ENCODE measurements at regions of chr12 and their contacts with region 1.

Region 1: GRCh38 chr12:13211859-13212664 is 15.5 kb downstream of the EMP1 start:
- DNase-seq: peak; percentile 71
- ATAC-seq: peak; percentile 48
- H3K4me3 ChIP-seq: no peak overlapping the region
- H3K27ac ChIP-seq: no peak overlapping the region
- H3K4me1 ChIP-seq: peaks cover 22% of the 10 kb centered on the region
- H3K27me3 ChIP-seq: no peaks in the 10 kb centered on the region
- CTCF ChIP-seq: peak; percentile 80
- POLR2A ChIP-seq: peak; percentile 37; the same call in 1 of the 2 replicates
- RAD21 ChIP-seq: peak; percentile 84

Region 2: DNA sequence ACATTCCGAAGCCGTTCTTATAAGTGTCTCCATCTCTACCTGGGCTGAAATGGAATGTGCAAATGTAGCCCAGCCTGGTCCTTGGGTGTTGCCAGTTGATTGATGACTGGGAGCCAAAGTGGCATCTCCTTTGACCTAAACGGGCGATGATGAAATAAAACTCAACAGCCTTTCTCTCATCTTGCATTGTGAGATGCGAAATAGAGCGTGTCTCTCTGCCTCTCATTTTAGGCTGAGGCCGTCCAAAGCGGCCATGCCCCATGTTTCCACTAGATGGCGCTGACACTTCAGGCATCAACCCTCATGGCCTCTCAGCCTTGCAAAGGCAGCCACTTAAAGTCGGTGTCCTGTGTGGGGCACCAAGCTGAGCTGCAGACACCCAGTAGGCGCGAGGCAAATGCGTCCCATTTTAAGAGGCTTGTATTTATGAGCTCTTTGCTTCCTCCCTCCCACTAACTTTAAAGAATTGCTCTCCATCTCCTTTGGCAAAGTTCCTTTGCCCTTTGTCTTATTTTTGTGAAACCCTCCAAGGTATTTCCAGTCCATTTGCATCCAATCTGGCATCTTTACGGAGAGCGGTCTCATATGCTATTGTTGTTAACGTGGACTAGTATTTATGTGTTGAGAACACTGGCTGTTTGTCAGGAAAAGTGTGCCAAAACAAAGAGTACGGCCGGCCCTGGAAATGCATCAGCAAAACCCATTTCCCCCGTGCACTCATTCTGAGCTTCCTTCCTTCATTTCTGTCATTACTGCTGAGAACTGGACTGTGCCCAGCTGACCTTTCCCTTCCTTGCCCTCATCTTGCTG is 295.7 kb before region 1 on chr12:
- CTCF ChIA-PET with region 1: no interaction called
- POLR2A ChIA-PET with region 1: no interaction called
- dilution Hi-C with region 1: no loop called
- in situ Hi-C with region 1: loop called (anchors 5 kb)
- intact Hi-C with region 1: loop called (anchors 1 kb)
- DNase-seq: peak; percentile 73
- ATAC-seq: peak; percentile 91
- H3K4me3 ChIP-seq: no peak overlapping the region
- H3K27ac ChIP-seq: no peak overlapping the region
- H3K4me1 ChIP-seq: peaks cover 10% of the 10 kb centered on the region
- H3K27me3 ChIP-seq: no peaks in the 10 kb centered on the region
- CTCF ChIP-seq: peak; percentile 95
- POLR2A ChIP-seq: peak; percentile 56
- RAD21 ChIP-seq: peak; percentile 97

Region 3: GRCh38 chr12:13023811-13024530 is 188.1 kb before region 1 on chr12:
- CTCF ChIA-PET with region 1: interaction called, 19 read pairs
- POLR2A ChIA-PET with region 1: no interaction called
- dilution Hi-C with region 1: no loop called
- in situ Hi-C with region 1: loop called (anchors 5 kb)
- intact Hi-C with region 1: loop called (anchors 1 kb)
- DNase-seq: peak; percentile 82
- ATAC-seq: peak; percentile 94
- H3K4me3 ChIP-seq: no peak overlapping the region
- H3K27ac ChIP-seq: no peak overlapping the region
- H3K4me1 ChIP-seq: peaks cover 3% of the 10 kb centered on the region
- H3K27me3 ChIP-seq: peaks cover 2% of the 10 kb centered on the region; the same call in 1 of the 2 replicates
- CTCF ChIP-seq: peak; percentile 80
- POLR2A ChIP-seq: 0 out of 2 replicates have a peak, but pooled peaks have one; percentile 46
- RAD21 ChIP-seq: peak; percentile 85

Region 4: GRCh38 chr12:13044002-13044905 is 167.8 kb before region 1 on chr12 and contains the start of gene FAM234B:
- CTCF ChIA-PET with region 1: interaction called, 11 read pairs
- POLR2A ChIA-PET with region 1: no interaction called
- dilution Hi-C with region 1: no loop called
- in situ Hi-C with region 1: no loop called
- intact Hi-C with region 1: no loop called
- DNase-seq: peak; percentile 62
- ATAC-seq: peak; percentile 99
- H3K4me3 ChIP-seq: peak within 1 kb of the TSS; percentile 95
- H3K27ac ChIP-seq: peak within 1 kb of the TSS; percentile 50
- H3K4me1 ChIP-seq: no peaks in the 10 kb centered on the region
- H3K27me3 ChIP-seq: no peaks in the 10 kb centered on the region
- CTCF ChIP-seq: no peak
- POLR2A ChIP-seq: no peak
- RAD21 ChIP-seq: no peak
- total RNA-seq, gene FAM234B: 6.7 and 8.6 TPM in 2 replicates

Region 5: DNA sequence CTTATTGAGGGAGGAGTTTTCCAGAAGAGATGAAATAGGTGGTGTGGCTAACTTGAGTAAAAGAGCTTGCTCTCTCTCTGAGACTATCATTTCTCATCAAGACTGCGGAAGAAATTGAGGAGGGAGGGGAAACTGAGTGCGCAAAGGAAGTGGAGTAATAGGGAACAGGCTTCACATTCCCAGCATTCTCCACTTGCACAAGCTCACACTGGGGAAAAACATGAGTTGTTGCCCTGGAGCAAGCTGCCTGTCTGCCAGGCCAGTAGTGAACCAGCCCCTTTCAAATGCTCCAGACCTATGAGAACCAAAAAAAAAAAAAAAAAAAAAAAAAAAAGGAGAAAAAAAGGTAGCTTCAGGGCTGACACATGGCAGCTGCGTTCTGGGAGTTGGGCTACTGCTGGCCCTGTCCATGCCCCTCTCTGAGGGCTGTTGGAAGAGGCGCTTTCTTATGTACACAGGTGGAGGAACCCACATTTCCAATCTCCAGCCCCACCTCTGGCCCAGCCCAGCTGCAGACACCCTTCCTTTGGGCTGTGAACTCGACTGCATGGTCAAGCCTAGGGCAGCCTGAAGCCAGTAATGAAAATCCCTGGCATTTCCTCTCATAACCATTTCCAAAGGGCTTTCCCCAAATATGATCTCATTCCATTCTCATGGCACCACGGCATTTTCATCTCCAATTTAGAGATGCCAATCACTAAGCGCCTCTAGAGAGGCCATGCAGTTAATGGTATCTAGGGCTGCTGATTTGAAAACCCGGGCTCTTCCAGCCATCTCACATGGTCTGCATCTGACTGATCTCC is 48.0 kb before region 1 on chr12:
- CTCF ChIA-PET with region 1: no interaction called
- POLR2A ChIA-PET with region 1: interaction called, 16 read pairs
- dilution Hi-C with region 1: no loop called
- in situ Hi-C with region 1: no loop called
- intact Hi-C with region 1: no loop called
- DNase-seq: no peak
- ATAC-seq: no peak
- H3K4me3 ChIP-seq: no peak overlapping the region
- H3K27ac ChIP-seq: no peak overlapping the region
- H3K4me1 ChIP-seq: peaks cover 4% of the 10 kb centered on the region
- H3K27me3 ChIP-seq: no peaks in the 10 kb centered on the region
- CTCF ChIP-seq: no peak
- POLR2A ChIP-seq: no peak
- RAD21 ChIP-seq: no peak

Measured in IMR-90 (cell line).